ENCODE measurements at regions of chr7 and their contacts with region 1.

Region 1: GRCh38 chr7:1512781-1513656 is 8.8 kb upstream of the INTS1 start:
- H3K4me3 ChIP-seq: no peak overlapping the region
- H3K27ac ChIP-seq: no peak overlapping the region
- H3K4me1 ChIP-seq: no peaks in the 10 kb centered on the region
- CTCF ChIP-seq: no peak

Region 2: GRCh38 chr7:1532483-1533424 is 19.7 kb after region 1 on chr7:
- CTCF ChIA-PET with region 1: no interaction called
- POLR2A ChIA-PET with region 1: interaction called, 10 read pairs
- H3K4me3 ChIP-seq: peak overlapping the region; percentile 71
- H3K27ac ChIP-seq: peak overlapping the region; percentile 62
- H3K4me1 ChIP-seq: peaks cover 26% of the 10 kb centered on the region
- CTCF ChIP-seq: no peak

Measured in HEK293 (cell line).